ENCODE measurements at regions of chr2 and their contacts with region 1.

Region 1: GRCh38 chr2:55133467-55134315 is 83.4 kb upstream of the RTN4 start:
- DNase-seq: peak in 13 of 14 experiments; percentile 10 to 93 (median 37)
- ATAC-seq: peak; percentile 92
- H3K4me3 ChIP-seq: peak overlapping the region; percentile 54
- H3K4me3 Mint-ChIP-seq: peak overlapping the region; percentile 91
- H3K27ac ChIP-seq: peak overlapping the region; percentile 80 to 95
- H3K27ac Mint-ChIP-seq: peak overlapping the region; percentile 94
- H3K4me1 ChIP-seq: peaks cover 28% of the 10 kb centered on the region
- H3K4me1 Mint-ChIP-seq: peaks cover 33% of the 10 kb centered on the region
- H3K27me3 ChIP-seq: no peaks in the 10 kb centered on the region
- H3K27me3 Mint-ChIP-seq: no peaks in the 10 kb centered on the region
- CTCF ChIP-seq: no peak

Region 2: DNA sequence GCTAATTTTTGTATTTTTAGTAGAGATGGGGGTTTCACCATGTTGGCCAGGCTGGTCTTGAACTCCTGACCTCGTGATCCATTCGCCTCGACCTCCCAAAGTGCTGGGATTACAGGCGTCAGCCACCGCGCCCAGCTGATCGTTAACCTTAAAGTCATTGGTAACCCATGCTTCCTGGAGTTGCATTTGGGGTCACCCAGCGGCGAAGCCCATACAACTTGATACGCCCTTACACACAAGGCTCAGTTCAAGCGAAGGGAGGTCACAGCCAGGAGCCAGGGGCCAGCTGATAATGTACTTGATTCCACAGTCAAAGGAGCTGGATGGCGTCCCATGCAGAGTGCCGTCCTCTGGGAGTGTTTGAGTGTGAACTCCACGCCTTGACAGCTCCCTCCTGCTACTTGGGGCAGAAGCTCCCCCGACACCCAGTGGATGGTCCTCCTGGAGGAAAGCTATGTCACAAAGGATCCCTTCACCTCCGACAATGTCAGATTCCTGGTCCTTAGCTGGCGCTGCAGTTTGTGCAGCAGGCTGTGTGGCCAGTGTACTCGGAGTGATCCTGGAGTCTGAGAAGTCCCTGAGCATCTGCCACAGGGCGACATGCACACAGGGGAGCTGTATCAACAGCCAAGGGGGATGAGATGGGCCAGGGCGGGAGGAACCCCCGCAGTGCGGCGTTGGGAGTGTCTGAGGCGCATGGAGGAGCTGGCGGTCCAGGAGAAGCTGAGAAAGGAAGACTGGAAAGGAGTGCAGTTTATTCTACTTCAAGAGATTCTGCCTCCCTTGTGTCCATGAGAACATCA is 90.5 kb after region 1 on chr2:
- CTCF ChIA-PET with region 1: no interaction called
- POLR2A ChIA-PET with region 1: interaction called, 3 read pairs
- intact Hi-C with region 1: loop called in 1 of 2 experiments (anchors 5 kb)
- DNase-seq: peak in 3 of 14 experiments; percentile 9 to 46 (median 34)
- ATAC-seq: no peak
- H3K4me3 ChIP-seq: peak overlapping the region; percentile 53
- H3K4me3 Mint-ChIP-seq: peak overlapping the region; percentile 87
- H3K27ac ChIP-seq: peak overlapping the region in 1 of 2 donors; percentile 80
- H3K27ac Mint-ChIP-seq: peak overlapping the region; percentile 86
- H3K4me1 ChIP-seq: peaks cover 14% of the 10 kb centered on the region
- H3K4me1 Mint-ChIP-seq: peaks cover 42% of the 10 kb centered on the region
- H3K27me3 ChIP-seq: no peaks in the 10 kb centered on the region
- H3K27me3 Mint-ChIP-seq: no peaks in the 10 kb centered on the region
- CTCF ChIP-seq: no peak